Prostate gland (tissue), 2 donors: ENCODE measurements at regions of chr10 and their contacts with region 1.

Region 1: DNA sequence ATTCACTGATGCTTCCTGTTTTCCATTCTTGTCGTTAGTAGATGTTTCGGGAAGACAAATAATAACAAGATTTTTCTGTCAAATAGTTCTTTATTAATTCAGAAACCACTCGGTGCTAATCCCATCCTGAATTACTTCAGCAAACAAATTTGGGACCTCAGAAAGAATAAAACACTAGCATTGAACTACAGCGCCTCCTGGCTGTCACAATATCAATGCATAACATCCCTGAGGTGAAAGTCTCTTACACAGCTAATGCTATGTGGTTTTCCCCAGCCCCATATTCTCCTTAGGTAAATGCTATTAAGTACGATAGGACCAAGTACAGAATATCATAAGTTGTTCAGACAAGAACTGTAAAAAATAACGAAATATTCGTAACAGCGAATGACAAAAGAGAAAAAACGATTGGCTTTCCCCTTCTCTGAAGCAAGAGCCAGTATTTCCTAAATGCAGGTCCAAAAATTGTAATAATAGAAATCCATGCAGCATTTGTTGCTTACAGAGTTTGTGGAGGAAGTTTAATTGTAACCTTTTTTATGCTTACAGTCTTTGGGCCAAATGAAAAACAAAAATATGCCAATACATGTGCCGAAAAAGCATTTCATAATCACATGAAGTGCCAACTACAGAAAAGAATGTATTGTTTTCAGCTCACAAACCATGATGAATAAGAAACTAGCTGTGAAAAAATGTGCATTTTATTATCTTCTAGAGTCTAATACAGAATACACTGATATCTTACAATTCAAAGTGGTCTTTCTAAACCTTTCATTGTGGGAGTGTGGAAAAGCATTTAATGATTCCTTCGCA is 47.3 kb downstream of the MYPN start:
- DNase-seq: peak; percentile 54
- H3K4me3 ChIP-seq: no peak overlapping the region
- H3K27ac ChIP-seq: no peak overlapping the region
- H3K4me1 ChIP-seq: no peaks in the 10 kb centered on the region
- H3K27me3 ChIP-seq: no peaks in the 10 kb centered on the region
- CTCF ChIP-seq: peak; percentile 72 to 84 (median 79)
- POLR2A ChIP-seq: no peak

Region 2: GRCh38 chr10:67858971-67859370 is 297.6 kb before region 1 on chr10:
- intact Hi-C with region 1: loop called (anchors 5 kb)
- DNase-seq: no peak
- H3K4me3 ChIP-seq: no peak overlapping the region
- H3K27ac ChIP-seq: no peak overlapping the region
- H3K4me1 ChIP-seq: no peaks in the 10 kb centered on the region
- H3K27me3 ChIP-seq: no peaks in the 10 kb centered on the region
- CTCF ChIP-seq: no peak
- POLR2A ChIP-seq: no peak

Region 3: DNA sequence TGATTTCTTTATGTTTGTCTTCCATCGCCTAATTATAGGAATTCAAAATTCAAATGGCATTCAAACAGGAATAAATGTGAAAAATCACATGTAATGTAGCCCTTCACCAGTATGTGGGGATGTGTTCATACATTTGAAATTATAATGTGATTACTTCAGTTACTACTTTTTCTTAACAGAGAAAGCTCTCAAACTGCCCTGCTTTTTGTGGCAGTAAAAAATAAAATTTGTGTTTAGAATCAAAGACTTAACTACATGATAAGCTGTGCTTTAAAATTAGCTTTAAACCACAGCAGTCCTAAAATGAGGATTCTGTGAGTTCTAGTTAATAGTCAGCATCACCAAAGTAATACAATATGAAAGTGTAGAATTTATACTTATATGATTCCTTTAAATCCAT is 73.7 kb before region 1 on chr10:
- intact Hi-C with region 1: loop called (anchors 5 kb)
- DNase-seq: no peak
- H3K4me3 ChIP-seq: no peak overlapping the region
- H3K27ac ChIP-seq: no peak overlapping the region
- H3K4me1 ChIP-seq: no peaks in the 10 kb centered on the region
- H3K27me3 ChIP-seq: no peaks in the 10 kb centered on the region
- CTCF ChIP-seq: peak in 1 of 4 experiments; percentile 47
- POLR2A ChIP-seq: no peak